Common myeloid progenitor, CD34-positive (primary cell): ENCODE measurements at regions of chr12 and their contacts with region 1.

Region 1: GRCh38 chr12:98725476-98726247 is 80.6 kb downstream of the APAF1 start:
- DNase-seq: peak; percentile 22 to 62 (median 45)
- H3K4me3 ChIP-seq: no peak overlapping the region
- H3K27ac ChIP-seq: no peak overlapping the region
- H3K4me1 ChIP-seq: peaks cover 0 to 7% (median 0%) of the 10 kb centered on the region in 4 experiments
- H3K27me3 ChIP-seq: no peaks in the 10 kb centered on the region

Region 2: GRCh38 chr12:98678259-98678945 is 47.3 kb before region 1 on chr12:
- CTCF ChIA-PET with region 1: no interaction called
- POLR2A ChIA-PET with region 1: no interaction called
- DNase-seq: no peak
- H3K4me3 ChIP-seq: no peak overlapping the region
- H3K27ac ChIP-seq: no peak overlapping the region
- H3K4me1 ChIP-seq: no peaks in the 10 kb centered on the region
- H3K27me3 ChIP-seq: no peaks in the 10 kb centered on the region

Region 3: GRCh38 chr12:98743347-98743953 is 17.8 kb after region 1 on chr12:
- CTCF ChIA-PET with region 1: interaction called, 10 read pairs
- POLR2A ChIA-PET with region 1: no interaction called
- DNase-seq: peak; percentile 18 to 44 (median 38)
- H3K4me3 ChIP-seq: no peak overlapping the region
- H3K27ac ChIP-seq: no peak overlapping the region
- H3K4me1 ChIP-seq: peaks cover 0 to 12% (median 9%) of the 10 kb centered on the region in 4 experiments
- H3K27me3 ChIP-seq: peaks cover 12 to 53% (median 25%) of the 10 kb centered on the region in 5 experiments